SK-N-SH (cell line): ENCODE measurements at regions of chr7 and their contacts with region 1.

Region 1: GRCh38 chr7:151705636-151706276 is 171.2 kb downstream of the PRKAG2 start:
- DNase-seq: peak; percentile 85
- H3K4me3 ChIP-seq: peak overlapping the region in 1 of 2 experiments; percentile 31; a peak in 1 of 4 replicates
- H3K27ac ChIP-seq: peak overlapping the region in 1 of 2 experiments; percentile 91; a peak in 2 of 4 replicates
- H3K4me1 ChIP-seq: peaks cover 0 to 26% of the 10 kb centered on the region in 2 experiments; a peak in 2 of 4 replicates
- H3K27me3 ChIP-seq: no peaks in the 10 kb centered on the region
- CTCF ChIP-seq: peak; percentile 77
- EP300 ChIP-seq: no peak
- RAD21 ChIP-seq: peak; percentile 65

Region 2: DNA sequence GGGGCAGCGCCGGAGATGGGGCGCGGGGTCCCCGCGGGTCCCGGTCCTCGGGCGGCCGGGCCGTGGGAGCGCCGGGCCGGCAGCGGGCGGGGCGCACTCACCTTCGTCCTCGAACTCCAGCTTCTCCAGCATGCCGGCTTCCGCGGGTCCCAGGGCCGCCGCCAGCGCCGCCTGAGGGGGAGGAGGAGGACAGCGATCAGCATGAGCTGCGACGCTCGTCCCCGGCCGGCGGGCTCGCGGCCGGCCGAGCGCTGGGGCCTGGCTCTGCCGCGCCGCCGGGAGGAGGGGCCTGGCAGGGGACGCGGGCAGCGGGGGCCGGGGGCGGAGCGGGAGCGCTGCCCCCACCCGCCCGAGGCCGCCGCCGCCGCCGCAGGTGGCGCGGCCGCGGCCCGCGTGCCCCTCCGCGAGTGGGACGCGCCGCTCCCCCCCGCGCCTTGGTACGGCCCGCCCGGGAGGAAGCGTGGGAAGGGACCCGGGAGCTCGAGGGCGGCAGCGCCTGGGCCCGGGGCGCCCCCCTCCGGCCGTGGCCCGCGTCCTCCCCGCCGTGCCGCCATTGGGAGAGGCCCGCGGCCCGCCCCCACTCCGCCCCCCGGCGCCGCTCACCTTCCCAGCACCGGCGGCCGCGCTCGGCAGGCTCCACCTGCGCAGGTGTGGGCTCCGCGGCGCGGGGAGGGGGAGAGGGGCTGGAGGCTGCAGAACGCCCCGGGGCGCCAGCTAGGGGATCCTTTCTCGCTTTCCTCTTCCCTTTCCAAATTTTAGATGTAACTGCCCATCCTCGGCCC is 73.6 kb before region 1 on chr7:
- CTCF ChIA-PET with region 1: interaction called, 40 read pairs
- POLR2A ChIA-PET with region 1: no interaction called
- DNase-seq: peak; percentile 97
- H3K4me3 ChIP-seq: peak overlapping the region; percentile 83 to 87
- H3K27ac ChIP-seq: peak overlapping the region; percentile 53 to 55
- H3K4me1 ChIP-seq: peaks cover 4 to 15% of the 10 kb centered on the region in 2 experiments; a peak in 2 of 4 replicates
- H3K27me3 ChIP-seq: no peaks in the 10 kb centered on the region
- CTCF ChIP-seq: peak; percentile 38
- EP300 ChIP-seq: no peak
- RAD21 ChIP-seq: peak; percentile 49

Region 3: GRCh38 chr7:151687523-151688218 is 18.1 kb before region 1 on chr7:
- CTCF ChIA-PET with region 1: interaction called, 45 read pairs
- POLR2A ChIA-PET with region 1: no interaction called
- DNase-seq: peak; percentile 61
- H3K4me3 ChIP-seq: no peak overlapping the region
- H3K27ac ChIP-seq: peak overlapping the region; percentile 77 to 83
- H3K4me1 ChIP-seq: peaks cover 3 to 37% of the 10 kb centered on the region in 2 experiments; a peak in 3 of 4 replicates
- H3K27me3 ChIP-seq: no peaks in the 10 kb centered on the region
- CTCF ChIP-seq: no peak
- EP300 ChIP-seq: peak in 1 of 2 experiments; percentile 97; a peak in 2 of 4 replicates
- RAD21 ChIP-seq: no peak

Region 4: GRCh38 chr7:151717415-151717814 is 11.7 kb after region 1 on chr7:
- CTCF ChIA-PET with region 1: interaction called, 15 read pairs
- POLR2A ChIA-PET with region 1: no interaction called
- DNase-seq: no peak
- H3K4me3 ChIP-seq: no peak overlapping the region
- H3K27ac ChIP-seq: no peak overlapping the region
- H3K4me1 ChIP-seq: peaks cover 0 to 7% of the 10 kb centered on the region in 2 experiments; a peak in 1 of 4 replicates
- H3K27me3 ChIP-seq: no peaks in the 10 kb centered on the region
- CTCF ChIP-seq: no peak
- EP300 ChIP-seq: no peak
- RAD21 ChIP-seq: no peak

Region 5: DNA sequence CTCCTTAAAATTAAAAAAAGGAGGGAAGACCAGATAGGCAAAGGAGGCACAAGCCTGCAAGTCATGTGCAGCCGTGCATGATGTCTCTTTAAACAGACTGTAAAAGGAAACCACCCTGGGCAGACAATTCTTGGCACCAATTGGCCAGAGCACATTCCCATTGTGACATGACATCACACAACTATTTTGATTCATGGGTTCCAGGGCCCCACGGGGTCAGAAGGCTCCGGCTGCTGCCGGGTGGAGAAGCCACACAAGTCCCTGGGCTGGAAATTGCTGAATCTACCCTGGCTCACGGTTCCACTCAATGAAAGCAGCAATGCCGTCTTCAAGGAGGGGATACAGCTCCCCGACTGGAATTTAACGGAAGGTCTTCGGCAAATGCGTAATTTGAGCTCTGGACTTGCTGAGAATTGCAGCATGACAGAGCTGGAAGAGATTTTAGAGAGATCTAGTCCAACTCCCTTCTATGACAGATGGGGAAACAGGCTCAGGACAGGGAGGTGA is 30.7 kb after region 1 on chr7:
- CTCF ChIA-PET with region 1: interaction called, 13 read pairs
- POLR2A ChIA-PET with region 1: no interaction called
- DNase-seq: peak; percentile 76
- H3K4me3 ChIP-seq: peak overlapping the region; percentile 27 to 48; a peak in 3 of 4 replicates
- H3K27ac ChIP-seq: peak overlapping the region; percentile 39 to 76; a peak in 3 of 4 replicates
- H3K4me1 ChIP-seq: peaks cover 6 to 14% of the 10 kb centered on the region in 2 experiments; a peak in 3 of 4 replicates
- H3K27me3 ChIP-seq: no peaks in the 10 kb centered on the region
- CTCF ChIP-seq: peak; percentile 48
- EP300 ChIP-seq: peak in 1 of 2 experiments; percentile 86; a peak in 2 of 4 replicates
- RAD21 ChIP-seq: peak; percentile 42